SK-N-SH (cell line): ENCODE measurements at regions of chr3 and their contacts with region 1.

Region 1: DNA sequence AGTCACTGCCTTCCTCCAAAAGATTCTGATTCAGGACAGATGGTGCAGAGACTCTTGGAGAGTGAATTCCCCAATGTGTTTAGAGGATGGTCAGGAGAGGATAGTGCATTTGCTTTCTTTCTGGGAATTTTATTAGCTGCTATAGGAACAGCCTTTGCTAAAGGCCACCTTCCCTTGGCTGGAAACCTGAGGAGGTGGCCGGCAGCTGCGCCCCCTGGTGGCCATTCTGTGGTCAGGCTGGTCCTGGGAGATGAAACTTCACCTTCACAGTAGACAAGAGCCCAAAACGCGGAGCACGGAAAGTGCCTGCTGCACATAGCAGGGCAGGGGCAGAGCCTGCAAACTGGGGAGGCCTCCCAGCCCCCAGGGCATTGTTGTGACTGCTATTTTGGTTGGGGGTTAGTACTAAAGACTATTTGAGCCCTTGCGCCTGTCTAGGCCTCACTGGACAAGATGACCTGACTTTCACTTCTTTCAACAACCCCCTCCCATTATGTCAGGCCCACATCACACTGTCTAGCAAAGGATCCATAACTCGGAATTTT is 34.3 kb downstream of the SEC22C start:
- DNase-seq: peak; percentile 76
- H3K4me3 ChIP-seq: peak overlapping the region in 1 of 2 experiments; percentile 48; a peak in 1 of 4 replicates
- H3K27ac ChIP-seq: no peak overlapping the region
- H3K4me1 ChIP-seq: peaks cover 0 to 14% of the 10 kb centered on the region in 2 experiments; a peak in 1 of 4 replicates
- H3K27me3 ChIP-seq: no peaks in the 10 kb centered on the region
- CTCF ChIP-seq: peak; percentile 98
- EP300 ChIP-seq: no peak
- RAD21 ChIP-seq: peak; percentile 55

Region 2: DNA sequence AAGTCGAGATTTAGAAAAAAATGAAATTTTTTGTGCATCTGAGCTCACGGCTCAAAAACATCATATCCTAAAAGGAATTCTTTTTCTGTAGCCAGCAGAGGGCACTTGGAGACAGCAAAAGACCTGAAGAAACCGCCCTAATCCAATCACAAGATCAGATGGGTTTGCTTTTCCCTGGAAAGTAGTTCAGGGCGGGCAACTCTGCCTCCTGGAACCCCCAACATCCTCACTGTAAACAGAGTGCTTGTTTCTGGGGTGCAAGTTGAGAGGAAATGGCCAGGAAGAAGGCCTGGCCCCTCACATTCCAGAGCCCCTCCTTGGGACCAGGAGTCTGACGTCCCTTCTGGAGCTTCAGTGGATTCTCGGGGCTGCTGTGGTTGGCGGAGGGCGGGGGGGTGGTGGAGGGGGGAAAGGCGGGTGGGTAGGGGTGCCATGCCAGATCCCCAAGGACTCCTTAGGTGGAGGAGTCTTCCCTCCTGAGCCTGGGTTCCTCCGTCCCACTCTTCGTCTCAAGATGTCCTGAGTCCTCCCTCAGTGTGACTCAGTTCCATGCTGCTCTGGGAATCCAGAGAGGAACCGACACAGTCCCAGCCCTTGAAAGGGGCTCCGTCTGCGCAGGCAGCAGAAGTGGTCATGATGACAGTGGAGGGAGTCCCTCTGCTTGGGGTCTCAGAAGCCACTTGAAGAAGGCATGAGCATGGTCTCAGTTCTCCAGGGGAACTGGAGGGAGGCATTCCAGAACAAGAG is 317.4 kb before region 1 on chr3:
- CTCF ChIA-PET with region 1: interaction called, 10 read pairs
- POLR2A ChIA-PET with region 1: no interaction called
- DNase-seq: peak; percentile 67
- H3K4me3 ChIP-seq: no peak overlapping the region; a peak in 1 of 4 replicates
- H3K27ac ChIP-seq: no peak overlapping the region
- H3K4me1 ChIP-seq: no peaks in the 10 kb centered on the region; a peak in 1 of 4 replicates
- H3K27me3 ChIP-seq: no peaks in the 10 kb centered on the region
- CTCF ChIP-seq: peak; percentile 72
- EP300 ChIP-seq: no peak
- RAD21 ChIP-seq: peak; percentile 77

Region 3: DNA sequence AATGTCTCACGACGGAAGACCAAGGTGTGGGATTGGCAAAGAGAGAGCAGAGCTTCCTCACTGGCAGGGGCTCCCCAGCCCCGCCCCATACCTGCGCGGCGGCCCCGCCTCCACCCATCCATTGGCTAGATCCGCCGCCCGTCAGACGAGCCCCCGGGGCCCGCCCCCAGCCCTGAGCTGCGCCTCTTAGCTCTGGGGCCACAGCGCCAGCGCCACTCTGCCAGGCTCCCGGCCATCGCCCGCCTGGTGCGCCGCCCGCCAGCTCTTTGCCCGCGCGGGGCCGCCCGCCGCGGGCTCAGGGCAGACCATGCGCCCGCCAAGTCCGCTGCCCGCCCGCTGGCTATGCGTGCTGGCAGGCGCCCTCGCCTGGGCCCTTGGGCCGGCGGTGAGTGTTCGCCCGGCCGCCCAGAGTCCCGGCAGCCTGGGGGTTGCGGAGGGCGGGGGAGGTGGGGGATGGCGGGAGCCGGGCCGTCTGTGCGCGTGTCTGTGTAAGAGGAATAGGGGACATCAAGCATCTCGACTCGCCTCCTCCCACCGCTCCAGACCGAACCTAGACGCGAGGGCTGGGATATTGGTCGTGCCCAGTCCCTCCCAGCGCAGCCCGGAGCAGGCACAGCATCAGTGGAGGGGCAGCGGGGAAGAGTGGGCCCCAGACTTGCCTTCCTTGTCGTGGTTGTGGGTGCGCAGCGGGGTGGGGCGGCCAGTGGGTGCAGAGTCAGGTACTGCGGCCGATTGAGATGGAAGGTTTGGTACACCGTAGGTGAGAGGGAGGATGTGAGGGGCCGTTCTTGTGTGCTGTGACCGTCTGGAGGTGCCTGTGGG is 44.8 kb before region 1 on chr3 and contains the start of gene VIPR1:
- CTCF ChIA-PET with region 1: interaction called, 38 read pairs
- POLR2A ChIA-PET with region 1: no interaction called
- DNase-seq: peak; percentile 92
- H3K4me3 ChIP-seq: peak within 1 kb of the TSS; percentile 32 to 36
- H3K27ac ChIP-seq: no peak within 1 kb of the TSS
- H3K4me1 ChIP-seq: peaks cover 0 to 13% of the 10 kb centered on the region in 2 experiments; a peak in 1 of 4 replicates
- H3K27me3 ChIP-seq: peaks cover 38% of the 10 kb centered on the region
- CTCF ChIP-seq: no peak
- EP300 ChIP-seq: no peak
- RAD21 ChIP-seq: no peak
- polyA plus RNA-seq, gene VIPR1: not detected in 2 replicates

Region 4: GRCh38 chr3:42535981-42536790 is 11.3 kb before region 1 on chr3:
- CTCF ChIA-PET with region 1: interaction called, 74 read pairs
- POLR2A ChIA-PET with region 1: no interaction called
- DNase-seq: peak; percentile 50
- H3K4me3 ChIP-seq: no peak overlapping the region
- H3K27ac ChIP-seq: no peak overlapping the region
- H3K4me1 ChIP-seq: peaks cover 0 to 3% of the 10 kb centered on the region in 2 experiments; a peak in 1 of 4 replicates
- H3K27me3 ChIP-seq: peaks cover 3% of the 10 kb centered on the region; the same call in 1 of the 2 replicates
- CTCF ChIP-seq: peak; percentile 48
- EP300 ChIP-seq: no peak
- RAD21 ChIP-seq: peak; percentile 13; the same call in 1 of the 2 replicates

Region 5: GRCh38 chr3:42562047-42562907 is 14.8 kb after region 1 on chr3:
- CTCF ChIA-PET with region 1: interaction called, 30 read pairs
- POLR2A ChIA-PET with region 1: no interaction called
- DNase-seq: no peak
- H3K4me3 ChIP-seq: no peak overlapping the region
- H3K27ac ChIP-seq: no peak overlapping the region
- H3K4me1 ChIP-seq: no peaks in the 10 kb centered on the region
- H3K27me3 ChIP-seq: no peaks in the 10 kb centered on the region
- CTCF ChIP-seq: no peak
- EP300 ChIP-seq: no peak
- RAD21 ChIP-seq: no peak